ENCODE measurements at regions of chr6 and their contacts with region 1.

Region 1: DNA sequence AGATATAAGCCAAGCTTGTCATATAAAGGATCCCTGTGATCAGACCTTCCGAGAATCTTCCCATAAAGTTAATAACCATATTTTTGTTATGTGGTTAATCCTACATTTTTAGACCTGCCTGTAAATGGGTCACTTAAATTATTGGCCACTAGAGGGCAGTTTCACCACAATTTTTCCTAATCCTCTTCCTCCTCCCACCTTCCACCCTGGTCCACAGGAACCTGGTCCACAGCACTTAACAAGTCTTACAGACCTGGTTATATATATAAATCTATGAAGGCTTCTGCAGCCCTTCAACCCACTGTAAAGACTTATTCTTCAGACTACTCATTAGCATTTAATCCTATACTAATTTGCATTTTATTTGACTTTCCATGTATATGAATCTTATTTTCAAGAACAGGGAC is 28.3 kb downstream of the MRS2 start:
- DNase-seq: peak; percentile 30
- ATAC-seq: peak; percentile 89
- H3K4me3 ChIP-seq: no peak overlapping the region
- H3K27ac ChIP-seq: no peak overlapping the region
- H3K4me1 ChIP-seq: no peaks in the 10 kb centered on the region
- H3K27me3 ChIP-seq: no peaks in the 10 kb centered on the region
- CTCF ChIP-seq: peak; percentile 79

Region 2: GRCh38 chr6:24296944-24297343 is 134.1 kb before region 1 on chr6:
- CTCF ChIA-PET with region 1: no interaction called
- POLR2A ChIA-PET with region 1: no interaction called
- in situ Hi-C with region 1: no loop called
- intact Hi-C with region 1: no loop called
- DNase-seq: no peak
- ATAC-seq: no peak
- H3K4me3 ChIP-seq: no peak overlapping the region
- H3K27ac ChIP-seq: no peak overlapping the region
- H3K4me1 ChIP-seq: no peaks in the 10 kb centered on the region
- H3K27me3 ChIP-seq: no peaks in the 10 kb centered on the region
- CTCF ChIP-seq: no peak

Region 3: DNA sequence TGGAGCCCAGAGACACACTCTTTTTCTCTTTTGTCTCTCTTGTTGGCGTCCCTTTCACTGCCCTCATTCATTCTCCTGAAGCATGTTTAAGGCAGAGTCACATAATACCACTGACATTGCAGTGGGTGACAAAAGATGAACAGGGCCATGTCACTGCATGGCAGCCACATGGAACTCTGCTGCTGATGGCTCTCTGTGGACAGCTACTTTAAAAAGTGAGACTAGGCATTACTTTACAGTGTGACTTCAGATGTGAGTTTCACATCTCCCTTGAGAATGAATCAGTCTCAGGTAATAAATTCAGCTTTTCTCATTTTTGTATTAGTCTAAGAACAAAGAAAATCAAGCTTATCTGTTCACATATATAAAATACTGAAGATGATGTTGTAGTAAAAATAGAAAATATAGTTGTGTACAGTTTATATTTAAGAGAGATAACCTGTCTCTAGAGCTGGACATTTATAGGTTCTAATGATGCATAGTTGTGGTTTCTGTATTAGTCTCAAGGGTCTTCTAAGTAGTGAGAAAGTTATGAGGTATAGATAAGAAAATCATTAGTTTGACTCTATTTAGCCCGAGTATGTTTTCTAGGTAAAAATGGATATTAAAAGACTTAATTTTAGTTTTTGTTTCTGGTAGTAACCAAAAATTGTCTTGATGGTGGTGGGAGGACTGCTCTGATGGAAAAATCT is 22.2 kb before region 1 on chr6:
- CTCF ChIA-PET with region 1: no interaction called
- POLR2A ChIA-PET with region 1: no interaction called
- in situ Hi-C with region 1: no loop called
- intact Hi-C with region 1: no loop called
- DNase-seq: no peak
- ATAC-seq: no peak
- H3K4me3 ChIP-seq: no peak overlapping the region
- H3K27ac ChIP-seq: no peak overlapping the region
- H3K4me1 ChIP-seq: peaks cover 8% of the 10 kb centered on the region
- H3K27me3 ChIP-seq: no peaks in the 10 kb centered on the region
- CTCF ChIP-seq: no peak

Region 4: GRCh38 chr6:24547243-24547642 is 116.2 kb after region 1 on chr6:
- CTCF ChIA-PET with region 1: no interaction called
- POLR2A ChIA-PET with region 1: no interaction called
- in situ Hi-C with region 1: no loop called
- intact Hi-C with region 1: no loop called
- DNase-seq: no peak
- ATAC-seq: no peak
- H3K4me3 ChIP-seq: no peak overlapping the region
- H3K27ac ChIP-seq: no peak overlapping the region
- H3K4me1 ChIP-seq: no peaks in the 10 kb centered on the region
- H3K27me3 ChIP-seq: no peaks in the 10 kb centered on the region
- CTCF ChIP-seq: no peak

Region 5: GRCh38 chr6:24699521-24700359 is 268.7 kb after region 1 on chr6:
- CTCF ChIA-PET with region 1: no interaction called
- POLR2A ChIA-PET with region 1: no interaction called
- in situ Hi-C with region 1: no loop called
- intact Hi-C with region 1: loop called (anchors 5 kb)
- DNase-seq: no peak
- ATAC-seq: no peak
- H3K4me3 ChIP-seq: no peak overlapping the region
- H3K27ac ChIP-seq: no peak overlapping the region
- H3K4me1 ChIP-seq: no peaks in the 10 kb centered on the region
- H3K27me3 ChIP-seq: no peaks in the 10 kb centered on the region
- CTCF ChIP-seq: no peak